ENCODE measurements at regions of chrX and their contacts with region 1.

Region 1: DNA sequence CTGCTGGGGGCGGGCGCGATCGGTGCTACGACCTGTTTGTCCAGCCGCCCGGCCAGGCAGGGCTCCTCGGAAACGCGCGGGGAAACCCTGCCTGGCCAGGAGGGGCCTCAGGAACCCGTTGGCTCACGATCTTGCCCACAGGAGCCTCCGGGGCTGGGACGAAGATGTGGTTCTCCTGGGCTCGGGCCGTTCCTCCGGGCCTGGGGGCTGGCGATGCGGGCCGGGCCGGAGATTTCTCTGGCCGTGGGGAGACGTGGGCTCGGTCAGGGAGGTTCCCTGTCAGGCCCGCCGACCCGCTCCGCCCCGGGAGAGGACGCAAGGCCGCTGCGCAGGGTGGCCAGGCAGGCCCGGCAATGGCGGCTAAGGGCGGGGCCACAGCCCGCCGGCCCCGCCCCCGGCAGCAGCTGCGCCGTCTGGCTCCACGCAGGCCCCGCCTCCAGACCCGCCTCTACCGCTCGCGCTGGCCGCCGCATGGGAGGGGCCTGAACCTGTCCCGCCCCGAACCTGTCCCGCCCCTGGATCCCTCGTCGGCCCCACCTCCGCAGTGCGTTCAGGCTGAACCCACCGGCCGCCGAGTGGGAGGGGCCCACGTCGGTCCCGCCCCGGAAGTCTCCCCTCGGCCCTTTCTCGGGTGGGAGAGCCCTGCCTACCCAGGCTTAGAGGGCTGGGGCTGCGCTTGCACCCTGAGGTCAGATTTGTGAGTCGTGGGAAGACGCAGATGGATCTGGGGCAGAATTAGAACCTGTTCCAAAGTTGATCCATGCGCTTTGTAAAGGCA is at the start of gene FAM3A:
- DNase-seq: peak; percentile 78 to 87 (median 87)
- H3K4me3 ChIP-seq: peak within 1 kb of the TSS; percentile 55 to 81 (median 71)
- H3K27ac ChIP-seq: peak within 1 kb of the TSS; percentile 61 to 77
- H3K4me1 ChIP-seq: peaks cover 0 to 34% (median 12%) of the 10 kb centered on the region in 4 experiments
- H3K27me3 ChIP-seq: peaks cover 0 to 8% (median 0%) of the 10 kb centered on the region in 5 experiments

Region 2: DNA sequence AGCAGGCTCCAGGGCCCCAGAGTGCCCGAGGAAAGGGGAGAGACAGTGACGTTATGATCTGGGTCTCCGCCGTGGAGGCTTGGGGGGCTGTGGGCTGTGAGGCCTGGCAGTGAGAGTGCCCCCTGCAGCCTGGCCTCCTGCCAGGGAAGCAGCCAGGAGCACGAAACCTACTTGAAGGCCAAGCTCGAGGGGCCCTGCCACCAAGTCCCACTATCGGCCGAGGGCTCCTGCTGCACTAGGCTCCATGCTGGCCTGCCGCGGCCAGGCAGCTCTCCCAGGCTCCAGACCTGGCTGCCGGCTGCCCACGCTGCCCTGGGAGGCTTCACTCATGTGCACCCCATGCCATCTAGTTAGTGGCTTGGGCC is 160.3 kb before region 1 on chrX:
- CTCF ChIA-PET with region 1: no interaction called
- POLR2A ChIA-PET with region 1: no interaction called
- DNase-seq: no peak
- H3K4me3 ChIP-seq: no peak overlapping the region
- H3K27ac ChIP-seq: no peak overlapping the region
- H3K4me1 ChIP-seq: peaks cover 0 to 1% (median 0%) of the 10 kb centered on the region in 4 experiments
- H3K27me3 ChIP-seq: peaks cover 0 to 1% (median 0%) of the 10 kb centered on the region in 5 experiments

Region 3: GRCh38 chrX:154526901-154527675 is 11.0 kb after region 1 on chrX:
- CTCF ChIA-PET with region 1: interaction called, 13 read pairs
- POLR2A ChIA-PET with region 1: interaction called, 4 read pairs
- DNase-seq: peak in 2 of 3 donors; percentile 63
- H3K4me3 ChIP-seq: peak overlapping the region in 5 of 7 experiments; percentile 12 to 69 (median 53)
- H3K27ac ChIP-seq: peak overlapping the region in 1 of 2 experiments; percentile 43
- H3K4me1 ChIP-seq: peaks cover 0 to 10% (median 9%) of the 10 kb centered on the region in 4 experiments
- H3K27me3 ChIP-seq: peaks cover 0 to 9% (median 0%) of the 10 kb centered on the region in 5 experiments

Measured in common myeloid progenitor, CD34-positive (primary cell).